Activated T-helper 1 cell treated with anti-CD3 and anti-CD28 coated beads, Interleukin-12 subunit alpha, Interleukin-12 subunit beta, Interleukin-2, Interleukin-4 antibody, amounts not matched to agents 30 ng/mL and 10 ng/mL and 1 ng/mL, durations not matched to agents 14 hours and 24 hours and 36 hours (primary cell): ENCODE measurements at regions of chr19 and their contacts with region 1.

Region 1: GRCh38 chr19:45492627-45493470 is 4.0 kb downstream of the RTN2 start:
- DNase-seq: no peak
- H3K4me3 Mint-ChIP-seq: peak overlapping the region; percentile 82
- H3K27ac Mint-ChIP-seq: no peak overlapping the region
- H3K4me1 Mint-ChIP-seq: peaks cover 37% of the 10 kb centered on the region
- H3K27me3 Mint-ChIP-seq: peaks cover 25% of the 10 kb centered on the region

Region 2: DNA sequence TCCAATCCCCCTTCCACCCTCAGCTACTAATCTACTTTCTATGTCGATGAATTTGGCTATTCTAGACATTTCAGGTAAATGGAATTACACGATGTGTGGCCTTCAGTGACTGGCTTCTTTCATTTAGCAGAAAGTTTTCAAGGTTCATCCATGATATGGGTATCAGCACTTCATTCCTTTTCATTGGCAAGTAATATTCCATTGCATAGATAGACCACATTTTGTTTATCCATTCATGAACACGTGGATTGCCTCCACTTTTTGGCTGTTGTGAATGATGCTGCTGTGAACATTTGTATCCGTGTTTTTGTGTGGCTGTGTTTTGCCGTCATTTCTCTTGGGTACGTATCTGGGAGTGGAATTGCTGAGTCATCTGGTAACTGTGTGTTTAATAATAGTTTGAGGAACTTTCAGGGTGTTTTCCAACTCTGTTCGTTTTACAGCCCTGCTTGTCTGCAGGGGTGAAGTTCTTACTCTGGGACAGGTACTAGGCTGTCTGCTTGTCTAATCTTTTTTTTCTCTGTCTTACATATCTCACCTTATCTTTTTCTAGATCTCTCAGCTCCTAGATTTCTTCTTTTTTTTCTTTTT is 209.3 kb before region 1 on chr19:
- intact Hi-C with region 1: no loop called
- DNase-seq: no peak
- H3K4me3 Mint-ChIP-seq: no peak overlapping the region
- H3K27ac Mint-ChIP-seq: no peak overlapping the region
- H3K4me1 Mint-ChIP-seq: no peaks in the 10 kb centered on the region
- H3K27me3 Mint-ChIP-seq: no peaks in the 10 kb centered on the region

Region 3: DNA sequence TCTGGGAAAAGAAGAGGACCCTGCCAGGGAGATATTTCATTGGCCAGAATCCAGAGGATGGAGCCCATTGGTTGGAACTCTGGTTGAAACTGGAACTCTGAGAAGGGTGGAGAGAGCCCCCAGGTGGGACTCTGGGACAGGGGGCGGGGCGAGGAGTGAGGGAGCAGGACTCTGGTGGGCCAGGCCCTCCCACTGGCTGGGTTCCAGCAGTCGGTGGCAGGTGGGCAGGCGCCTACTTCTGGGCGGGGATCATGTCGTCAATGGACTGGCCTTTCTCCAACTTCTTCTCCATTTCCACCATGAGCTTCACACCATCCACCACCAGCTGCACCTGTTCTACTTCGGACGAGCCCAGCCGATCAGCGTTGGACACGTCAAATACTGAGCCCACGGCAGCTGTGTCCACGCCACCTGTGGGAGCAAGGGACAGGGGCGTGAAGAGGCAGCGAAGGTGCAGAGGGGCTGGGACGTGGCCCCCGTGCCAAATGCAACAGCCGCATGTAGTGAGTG is 186.3 kb before region 1 on chr19:
- intact Hi-C with region 1: no loop called
- DNase-seq: no peak
- H3K4me3 Mint-ChIP-seq: no peak overlapping the region
- H3K27ac Mint-ChIP-seq: no peak overlapping the region
- H3K4me1 Mint-ChIP-seq: no peaks in the 10 kb centered on the region
- H3K27me3 Mint-ChIP-seq: no peaks in the 10 kb centered on the region

Region 4: GRCh38 chr19:45558399-45558878 is 65.6 kb after region 1 on chr19:
- intact Hi-C with region 1: loop called (anchors 1 kb)
- DNase-seq: peak; percentile 57
- H3K4me3 Mint-ChIP-seq: no peak overlapping the region
- H3K27ac Mint-ChIP-seq: no peak overlapping the region
- H3K4me1 Mint-ChIP-seq: peaks cover 10% of the 10 kb centered on the region
- H3K27me3 Mint-ChIP-seq: no peaks in the 10 kb centered on the region